ENCODE measurements at regions of chr4 and their contacts with region 1.

Region 1: DNA sequence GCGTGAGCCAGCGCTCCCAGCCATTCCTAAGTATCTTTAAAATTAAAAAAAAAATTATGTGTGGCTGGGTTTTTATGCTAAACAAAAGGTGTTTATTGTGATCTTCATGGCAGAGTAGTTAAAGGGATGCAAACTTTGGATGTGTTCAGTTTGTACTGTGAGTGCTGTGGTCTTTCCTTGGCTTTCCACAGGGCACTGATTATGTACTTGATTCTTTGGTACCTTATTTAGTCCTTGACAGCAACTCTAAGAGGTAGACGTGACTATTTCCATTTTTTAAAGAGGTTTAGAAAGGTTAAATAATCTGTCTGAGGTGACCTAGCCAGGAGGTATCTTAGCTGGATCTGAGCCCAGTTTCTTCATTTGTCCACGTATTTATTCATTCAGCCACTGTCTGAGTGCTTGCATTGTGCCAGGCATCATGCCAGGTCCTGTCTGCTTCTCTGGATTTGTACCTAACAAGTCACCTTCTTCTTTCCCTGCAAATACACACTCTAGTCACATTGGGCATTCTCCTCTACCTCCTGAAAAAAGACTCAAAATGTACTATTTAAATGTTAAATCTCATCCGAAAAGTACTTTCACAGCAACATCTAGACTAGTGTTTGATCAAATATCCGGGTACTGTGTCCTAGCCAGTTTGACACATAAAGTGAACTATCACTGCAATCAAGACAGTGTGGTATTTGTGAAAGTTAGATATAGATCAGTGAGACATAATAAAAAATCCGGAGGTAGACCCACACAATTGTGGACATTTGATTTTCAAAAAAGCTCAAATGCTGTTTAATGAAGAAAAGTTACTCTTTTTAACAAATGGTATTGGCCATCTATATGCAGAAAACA is 31.5 kb downstream of the WWC2 start:
- DNase-seq: peak; percentile 49 to 58
- H3K4me3 ChIP-seq: no peak overlapping the region
- H3K27ac ChIP-seq: no peak overlapping the region
- H3K4me1 ChIP-seq: peaks cover 9% of the 10 kb centered on the region; the same call in 1 of the 2 replicates
- H3K27me3 ChIP-seq: no peaks in the 10 kb centered on the region
- CTCF ChIP-seq: no peak

Region 2: DNA sequence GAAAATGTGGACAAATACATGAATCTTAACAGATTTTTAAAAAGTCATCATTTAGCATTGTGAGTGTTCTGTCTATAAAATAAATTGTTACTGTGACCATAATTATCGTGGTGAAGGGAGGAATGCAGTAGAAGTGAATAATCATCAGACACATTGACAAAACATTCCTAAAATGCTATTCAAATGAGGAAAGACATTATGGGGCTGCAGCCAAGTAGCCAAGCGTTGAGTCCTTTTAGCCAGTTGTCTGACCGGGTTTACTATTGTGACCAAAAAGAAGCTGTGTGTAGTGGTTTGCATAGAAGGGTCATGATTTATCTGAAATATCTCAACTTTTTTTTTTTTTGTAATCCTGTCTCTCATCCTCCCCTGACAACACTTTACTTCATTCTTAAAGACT is 12.0 kb before region 1 on chr4:
- CTCF ChIA-PET with region 1: no interaction called
- POLR2A ChIA-PET with region 1: interaction called, 5 read pairs
- intact Hi-C with region 1: loop called (anchors 1 kb)
- DNase-seq: peak; percentile 53 to 86
- H3K4me3 ChIP-seq: no peak overlapping the region
- H3K27ac ChIP-seq: peak overlapping the region; percentile 54
- H3K4me1 ChIP-seq: peaks cover 14% of the 10 kb centered on the region
- H3K27me3 ChIP-seq: no peaks in the 10 kb centered on the region
- CTCF ChIP-seq: no peak

Region 3: DNA sequence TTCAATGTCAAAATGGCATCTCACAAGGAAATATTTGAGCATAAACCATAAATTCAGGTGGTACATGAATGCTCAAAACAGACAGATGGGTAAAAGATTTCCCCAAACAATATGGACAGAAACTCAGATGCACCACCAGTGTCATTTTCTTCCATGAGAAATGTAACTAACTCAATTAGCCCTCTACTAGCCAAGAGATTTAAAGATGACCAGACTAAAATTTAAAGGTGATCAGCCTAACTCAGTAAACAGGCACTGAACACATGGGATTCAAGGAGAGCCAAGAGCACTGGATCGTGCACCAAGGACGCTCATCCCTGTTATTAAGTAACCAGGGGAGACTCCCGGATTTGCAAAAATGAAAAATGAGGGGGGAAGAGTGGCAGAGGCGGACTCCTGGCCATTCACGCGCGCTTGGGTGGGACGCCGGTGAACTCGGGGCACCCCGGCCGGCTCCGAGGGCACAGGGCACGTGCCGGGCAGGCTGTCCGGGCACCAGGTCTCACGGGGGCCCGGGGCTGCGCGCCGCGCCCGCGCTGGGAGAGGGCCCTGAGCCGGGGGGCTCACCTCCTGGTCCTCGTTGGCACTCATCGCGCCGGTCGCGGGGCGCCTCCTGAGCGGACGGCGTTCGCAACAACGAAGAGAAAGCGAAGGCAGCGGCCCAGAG is 527.9 kb after region 1 on chr4:
- CTCF ChIA-PET with region 1: no interaction called
- POLR2A ChIA-PET with region 1: no interaction called
- intact Hi-C with region 1: no loop called
- DNase-seq: peak in 1 of 2 experiments; percentile 15
- H3K4me3 ChIP-seq: peak overlapping the region; percentile 92
- H3K27ac ChIP-seq: no peak overlapping the region
- H3K4me1 ChIP-seq: peaks cover 18% of the 10 kb centered on the region
- H3K27me3 ChIP-seq: no peaks in the 10 kb centered on the region
- CTCF ChIP-seq: no peak

Measured in PC-9 (cell line).